ENCODE measurements at regions of chr10 and their contacts with region 1.

Region 1: GRCh38 chr10:6202684-6203330 is at the start of gene PFKFB3:
- DNase-seq: peak; percentile 97
- CTCF ChIP-seq: peak; percentile 97

Region 2: DNA sequence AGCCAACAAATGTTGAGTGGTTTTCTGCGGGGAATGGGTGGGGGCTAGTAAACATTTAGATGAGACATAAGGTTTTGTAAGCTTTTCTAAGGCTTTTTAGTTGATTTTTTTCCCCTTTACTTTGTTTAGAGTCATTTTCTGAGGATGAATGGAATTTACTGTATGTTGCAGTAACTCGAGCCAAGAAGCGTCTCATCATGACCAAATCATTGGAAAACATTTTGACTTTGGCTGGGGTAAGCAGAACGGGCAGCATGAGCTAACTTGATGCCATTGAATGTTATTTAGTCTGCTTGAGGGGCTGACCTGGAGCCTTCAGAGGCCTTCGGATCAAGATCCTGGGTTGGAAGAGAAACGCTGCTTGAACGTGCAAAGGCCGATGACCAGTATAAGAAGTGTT is 275.5 kb before region 1 on chr10:
- CTCF ChIA-PET with region 1: no interaction called
- POLR2A ChIA-PET with region 1: no interaction called
- DNase-seq: no peak
- CTCF ChIP-seq: no peak

Region 3: GRCh38 chr10:6108603-6109443 is 94.0 kb before region 1 on chr10:
- CTCF ChIA-PET with region 1: interaction called, 11 read pairs
- POLR2A ChIA-PET with region 1: interaction called, 4 read pairs
- DNase-seq: peak; percentile 58
- CTCF ChIP-seq: peak; percentile 52

Region 4: GRCh38 chr10:6151087-6151977 is 51.5 kb before region 1 on chr10:
- CTCF ChIA-PET with region 1: interaction called, 22 read pairs
- POLR2A ChIA-PET with region 1: interaction called, 5 read pairs
- DNase-seq: peak; percentile 78
- CTCF ChIP-seq: peak; percentile 71

Region 5: GRCh38 chr10:6185039-6185716 is 17.6 kb before region 1 on chr10:
- CTCF ChIA-PET with region 1: interaction called, 13 read pairs
- POLR2A ChIA-PET with region 1: interaction called, 4 read pairs
- DNase-seq: no peak
- CTCF ChIP-seq: no peak

Region 6: DNA sequence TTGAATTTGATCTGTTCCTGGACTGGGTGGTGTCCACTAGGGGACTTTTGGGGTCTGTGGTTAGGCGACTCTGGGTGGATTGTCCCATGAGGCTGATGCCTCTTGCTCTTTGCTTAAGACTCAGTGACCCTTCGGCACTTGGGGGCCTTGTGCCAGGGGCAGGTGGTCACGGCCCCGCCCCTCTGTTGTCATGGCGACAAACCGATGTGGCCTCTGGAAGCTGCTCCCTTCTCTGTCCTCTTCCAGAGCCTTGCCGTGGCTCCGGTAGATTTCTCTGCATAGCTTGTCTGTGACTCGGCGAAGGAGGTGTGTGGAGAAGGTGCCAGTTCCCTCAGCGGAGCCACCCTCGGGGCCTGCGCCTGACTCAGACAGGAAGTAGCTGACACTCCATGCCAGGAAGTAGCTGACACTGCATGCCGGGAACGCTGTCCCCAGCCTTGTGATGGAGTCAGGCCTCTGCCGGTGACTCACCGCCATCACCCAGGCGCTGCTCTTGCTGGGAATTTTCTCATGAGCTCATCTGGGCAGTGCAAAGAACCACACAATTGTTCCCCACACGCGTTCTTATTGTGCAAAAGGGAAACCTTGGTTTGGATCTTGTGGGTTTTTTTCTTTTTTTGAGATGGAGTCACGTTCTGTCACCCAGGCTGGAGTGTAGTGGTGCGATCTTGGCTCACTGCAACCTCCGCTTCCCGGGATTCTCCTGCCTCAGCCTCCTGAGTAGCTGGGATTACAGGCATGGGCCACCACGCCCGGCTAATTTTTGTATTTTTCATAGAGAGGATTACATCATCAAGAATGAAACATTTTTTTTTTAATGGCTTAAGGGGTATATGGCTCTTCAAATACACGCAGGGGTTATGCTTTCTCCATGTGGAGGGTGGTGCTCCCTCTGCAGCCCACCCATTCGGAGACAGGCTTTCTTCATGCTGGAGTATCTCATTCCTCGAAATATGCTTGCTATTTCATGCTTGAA is 72.5 kb after region 1 on chr10:
- CTCF ChIA-PET with region 1: interaction called, 12 read pairs
- POLR2A ChIA-PET with region 1: interaction called, 7 read pairs
- DNase-seq: peak; percentile 82
- CTCF ChIP-seq: no peak

Region 7: DNA sequence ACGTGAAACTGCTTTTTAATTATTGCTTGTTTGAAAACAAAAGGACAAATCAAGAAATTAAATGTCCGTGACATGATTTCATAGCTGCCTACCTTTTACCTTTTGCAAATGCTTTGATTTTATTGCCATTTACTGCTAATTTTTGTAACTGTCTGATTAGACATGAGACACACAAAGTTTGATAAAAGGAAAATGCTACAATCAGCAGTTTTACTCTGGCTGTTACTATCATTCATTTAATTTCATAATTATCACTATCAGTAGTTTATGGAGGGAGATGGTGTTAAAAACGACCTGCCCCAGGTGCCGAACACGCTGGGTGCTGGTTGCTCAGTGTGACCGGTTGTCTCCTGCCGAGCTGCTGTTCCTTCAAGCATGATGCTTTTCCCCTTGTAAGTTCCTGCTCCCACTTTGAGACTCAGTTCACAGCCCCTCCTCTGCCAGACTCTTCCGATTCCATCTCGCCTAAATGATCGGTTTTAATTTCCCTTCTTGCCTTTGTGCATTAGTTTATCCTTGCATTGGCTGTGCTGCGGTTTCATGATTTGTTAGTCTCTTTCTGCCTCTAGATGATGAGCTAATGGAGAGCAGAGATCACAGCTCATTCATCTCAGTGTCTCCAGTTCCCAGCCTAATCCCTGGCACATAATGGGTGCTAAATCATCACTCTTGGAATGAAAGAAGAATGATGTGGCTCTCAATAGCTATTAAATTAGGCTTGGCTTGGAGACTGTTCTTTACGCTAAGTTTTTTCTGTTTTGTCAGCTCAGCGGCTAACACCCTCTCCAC is 110.5 kb after region 1 on chr10:
- CTCF ChIA-PET with region 1: interaction called, 10 read pairs
- POLR2A ChIA-PET with region 1: interaction called, 3 read pairs
- DNase-seq: no peak
- CTCF ChIP-seq: no peak

Region 8: DNA sequence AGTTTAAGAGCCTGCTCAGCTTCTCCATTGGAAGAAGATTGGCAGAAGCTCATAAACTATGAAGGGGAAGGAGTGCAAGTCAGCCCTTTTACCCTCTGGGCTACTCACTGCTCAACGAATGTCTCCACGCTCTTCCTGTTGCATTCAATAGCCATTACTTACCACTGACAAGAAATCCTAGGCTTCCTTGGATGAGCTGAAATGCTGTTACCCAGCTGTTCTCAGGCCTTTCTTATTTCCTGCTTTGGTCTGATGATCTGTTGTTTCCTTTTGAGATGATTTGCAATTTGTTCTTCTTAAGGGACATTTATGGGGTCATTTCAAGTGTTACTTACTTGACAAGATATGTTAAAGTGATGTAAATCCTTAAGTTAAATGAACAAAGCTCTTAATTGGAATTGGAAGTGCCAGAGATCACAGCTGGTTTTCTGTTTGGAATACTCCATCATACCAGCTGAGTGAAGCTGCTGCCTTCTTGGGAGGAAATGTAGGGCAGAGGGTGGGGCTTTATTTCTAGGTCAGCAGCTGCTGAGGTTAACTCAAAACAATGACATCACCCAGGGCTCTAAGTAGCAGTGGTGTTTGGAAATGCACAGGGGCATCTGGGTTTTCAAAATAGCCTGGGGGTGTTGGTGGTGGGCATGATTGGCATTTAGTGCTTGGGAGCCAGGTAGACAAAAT is 207.3 kb after region 1 on chr10:
- CTCF ChIA-PET with region 1: interaction called, 21 read pairs
- POLR2A ChIA-PET with region 1: interaction called, 8 read pairs
- DNase-seq: no peak
- CTCF ChIP-seq: no peak